AG04450 (cell line): ENCODE measurements at regions of chr11 and their contacts with region 1.

Region 1: DNA sequence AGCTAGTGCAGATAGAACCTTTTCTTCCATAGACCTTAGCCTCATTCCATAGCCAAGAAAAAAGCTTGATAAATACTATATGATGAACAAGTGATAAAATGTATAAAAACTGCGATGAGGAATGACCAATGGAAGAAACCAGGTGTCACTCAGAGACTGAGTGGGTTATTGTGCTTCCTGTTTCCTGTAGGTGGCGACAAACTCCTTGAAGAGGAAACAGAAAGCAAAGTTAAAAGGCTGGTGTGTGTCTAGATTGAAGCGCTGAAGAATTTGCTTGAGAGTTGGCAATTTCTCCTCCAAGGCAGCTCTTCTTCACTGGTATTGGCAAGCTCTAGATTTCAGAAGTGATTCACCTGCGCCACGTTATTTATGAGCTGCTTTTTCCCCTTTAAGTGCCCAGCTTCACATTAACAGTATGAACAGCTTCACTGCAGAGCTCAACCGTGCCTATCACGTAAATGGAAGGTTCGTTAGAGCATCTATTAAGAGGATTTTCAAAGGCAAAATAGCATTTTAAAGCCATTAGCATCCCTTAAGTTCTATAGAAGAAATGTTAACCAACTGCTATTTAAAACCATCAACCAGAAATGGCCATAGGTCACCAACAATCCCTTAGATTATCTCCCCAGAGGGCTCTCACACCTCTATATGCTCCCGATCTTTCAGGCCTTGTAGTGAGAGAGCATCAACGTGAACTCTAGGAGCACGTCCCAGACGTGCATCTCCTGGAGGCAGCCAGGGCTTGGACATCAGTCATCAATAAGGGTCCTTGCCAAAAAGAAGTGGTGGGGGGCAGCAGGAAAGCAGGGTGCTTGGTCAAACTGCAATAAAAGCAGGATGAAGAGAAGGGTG is 179.4 kb downstream of the CADM1 start:
- DNase-seq: peak; percentile 24
- H3K4me3 ChIP-seq: no peak overlapping the region
- H3K27ac ChIP-seq: no peak overlapping the region
- H3K27me3 ChIP-seq: no peaks in the 10 kb centered on the region
- CTCF ChIP-seq: peak; percentile 88

Region 2: GRCh38 chr11:115279813-115280761 is 44.7 kb before region 1 on chr11:
- CTCF ChIA-PET with region 1: interaction called, 11 read pairs
- POLR2A ChIA-PET with region 1: no interaction called
- DNase-seq: peak; percentile 63
- H3K4me3 ChIP-seq: no peak overlapping the region
- H3K27ac ChIP-seq: peak overlapping the region; percentile 79
- H3K27me3 ChIP-seq: no peaks in the 10 kb centered on the region
- CTCF ChIP-seq: no peak

Region 3: GRCh38 chr11:115304774-115305472 is 19.9 kb before region 1 on chr11:
- CTCF ChIA-PET with region 1: interaction called, 11 read pairs
- POLR2A ChIA-PET with region 1: no interaction called
- DNase-seq: no peak
- H3K4me3 ChIP-seq: no peak overlapping the region
- H3K27ac ChIP-seq: no peak overlapping the region
- H3K27me3 ChIP-seq: no peaks in the 10 kb centered on the region
- CTCF ChIP-seq: no peak

Region 4: GRCh38 chr11:115313224-115313838 is 11.5 kb before region 1 on chr11:
- CTCF ChIA-PET with region 1: interaction called, 15 read pairs
- POLR2A ChIA-PET with region 1: no interaction called
- DNase-seq: no peak
- H3K4me3 ChIP-seq: no peak overlapping the region
- H3K27ac ChIP-seq: no peak overlapping the region
- H3K27me3 ChIP-seq: no peaks in the 10 kb centered on the region
- CTCF ChIP-seq: no peak

Region 5: DNA sequence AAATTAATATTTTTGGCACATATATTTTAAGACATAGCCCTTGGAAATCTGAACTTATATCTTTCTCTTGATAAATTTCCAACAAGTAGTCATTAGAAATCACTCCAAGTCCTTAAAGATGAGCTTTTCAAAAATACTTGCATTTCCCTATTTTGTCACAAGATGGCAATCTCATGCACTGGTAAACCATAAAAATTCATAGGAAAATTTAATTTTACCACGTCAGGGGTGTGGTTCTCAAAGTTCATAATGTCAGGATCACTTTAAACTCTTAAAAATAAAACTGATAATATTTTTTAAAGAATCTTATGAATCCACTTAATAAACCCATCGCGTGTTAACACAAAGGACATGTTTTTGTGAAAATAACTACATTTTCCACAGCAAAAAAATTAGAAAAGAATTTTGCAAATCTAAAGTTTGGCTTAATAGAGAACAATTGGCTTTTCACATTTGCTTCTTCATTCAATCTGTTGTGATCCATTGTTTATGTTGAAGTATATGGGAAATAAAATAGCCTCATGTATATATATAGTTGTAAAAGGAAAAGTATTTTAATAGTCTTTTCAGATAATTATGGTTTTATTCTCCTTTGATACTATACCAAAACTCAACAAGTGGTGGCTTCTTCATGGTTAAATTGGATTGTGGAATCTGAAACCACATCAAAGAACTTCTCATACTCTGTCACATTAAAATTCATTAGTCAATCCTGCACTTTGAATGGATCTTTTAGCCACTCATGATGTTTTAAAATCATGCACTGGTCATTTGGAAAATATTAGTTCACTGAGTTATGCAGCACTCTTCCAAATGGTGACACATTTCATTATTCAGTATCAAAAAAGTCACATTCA is 10.4 kb after region 1 on chr11:
- CTCF ChIA-PET with region 1: interaction called, 32 read pairs
- POLR2A ChIA-PET with region 1: no interaction called
- DNase-seq: no peak
- H3K4me3 ChIP-seq: no peak overlapping the region
- H3K27ac ChIP-seq: no peak overlapping the region
- H3K27me3 ChIP-seq: no peaks in the 10 kb centered on the region
- CTCF ChIP-seq: peak; percentile 80

Region 6: DNA sequence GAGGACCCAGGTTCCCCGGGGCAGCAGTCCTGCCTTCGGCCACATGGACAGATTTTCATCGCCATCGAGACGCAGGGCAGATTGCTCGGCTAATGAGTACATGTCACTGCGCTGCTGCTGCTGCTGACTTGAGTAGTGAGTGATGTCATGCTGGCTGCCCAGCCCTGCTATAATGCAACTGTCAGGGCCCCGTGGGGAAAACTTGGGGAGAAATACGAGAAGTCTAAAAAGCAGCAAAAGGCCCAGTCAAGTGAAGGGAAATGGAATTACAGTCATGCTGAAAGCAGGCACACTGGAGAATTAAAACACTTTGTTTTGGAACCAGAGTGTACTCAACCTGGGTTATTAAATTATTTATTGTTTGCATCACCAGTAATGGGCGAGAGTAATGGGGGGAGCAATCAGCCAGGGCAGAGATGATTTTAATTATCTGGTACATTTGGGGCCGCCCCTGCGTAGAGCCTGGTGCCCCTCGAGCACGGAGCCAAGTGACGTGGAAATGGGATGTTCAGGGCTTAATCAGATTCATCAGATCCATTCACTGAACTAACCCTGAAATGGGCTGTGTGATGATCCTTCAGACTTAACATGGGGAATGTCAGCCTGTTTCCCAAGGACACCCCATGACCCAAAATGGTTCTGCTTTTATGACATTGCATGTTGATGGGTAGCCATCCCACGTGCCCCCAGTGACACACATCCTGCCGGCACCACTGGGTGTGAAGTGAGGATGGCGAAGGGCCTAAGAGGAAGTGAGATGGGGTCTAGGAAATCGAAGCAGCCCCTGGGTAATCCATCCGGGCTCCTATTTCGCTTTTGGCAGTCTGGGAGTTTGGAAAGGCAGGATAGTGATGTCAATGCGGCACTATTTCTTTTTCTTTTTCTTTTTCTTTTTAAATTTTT is 421.1 kb after region 1 on chr11:
- CTCF ChIA-PET with region 1: no interaction called
- POLR2A ChIA-PET with region 1: no interaction called
- DNase-seq: no peak
- H3K4me3 ChIP-seq: no peak overlapping the region
- H3K27ac ChIP-seq: no peak overlapping the region
- H3K27me3 ChIP-seq: peaks cover 41% of the 10 kb centered on the region
- CTCF ChIP-seq: no peak